A673 (cell line): ENCODE measurements at regions of chr11 and their contacts with region 1.

Region 1: GRCh38 chr11:78284260-78284659 is 95.5 kb downstream of the USP35 start:
- DNase-seq: no peak
- H3K4me3 ChIP-seq: no peak overlapping the region
- H3K27ac ChIP-seq: no peak overlapping the region
- H3K4me1 ChIP-seq: peaks cover 2% of the 10 kb centered on the region
- H3K27me3 ChIP-seq: no peaks in the 10 kb centered on the region
- CTCF ChIP-seq: no peak

Region 2: GRCh38 chr11:79040348-79040747 is 756.1 kb after region 1 on chr11:
- CTCF ChIA-PET with region 1: no interaction called
- POLR2A ChIA-PET with region 1: interaction called, 11 read pairs
- intact Hi-C with region 1: no loop called
- DNase-seq: no peak
- H3K4me3 ChIP-seq: no peak overlapping the region
- H3K27ac ChIP-seq: no peak overlapping the region
- H3K4me1 ChIP-seq: no peaks in the 10 kb centered on the region
- H3K27me3 ChIP-seq: peaks cover 4% of the 10 kb centered on the region
- CTCF ChIP-seq: no peak